ENCODE measurements at regions of chr12 and their contacts with region 1.

Region 1: GRCh38 chr12:124767066-124767821 is 96.4 kb downstream of the SCARB1 start:
- DNase-seq: no peak
- H3K4me3 ChIP-seq: no peak overlapping the region
- H3K27ac ChIP-seq: peak overlapping the region; percentile 82
- H3K4me1 ChIP-seq: peaks cover 35% of the 10 kb centered on the region
- H3K27me3 ChIP-seq: no peaks in the 10 kb centered on the region
- CTCF ChIP-seq: peak; percentile 98 to 99 (median 98)
- POLR2A ChIP-seq: no peak

Region 2: DNA sequence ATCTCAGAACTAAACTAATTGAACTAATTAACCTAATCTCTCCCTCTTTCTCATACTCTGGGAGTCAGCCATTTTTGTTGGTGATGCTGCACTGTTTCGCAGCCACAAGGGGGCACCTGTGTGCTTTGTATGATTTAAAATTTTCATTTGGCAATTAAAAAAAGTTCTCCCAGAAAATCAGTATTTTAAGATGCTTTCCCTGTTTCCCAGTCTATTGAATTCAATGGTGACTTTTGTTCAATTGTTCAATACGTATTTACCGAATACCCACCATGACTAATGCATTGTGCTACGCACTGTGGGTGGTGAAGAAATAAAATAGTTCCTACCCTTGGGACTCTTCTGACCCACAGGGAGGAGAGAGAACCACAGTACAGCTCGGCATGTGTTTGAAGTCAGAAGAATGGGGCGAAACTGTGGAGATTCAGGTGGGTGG is 730.6 kb before region 1 on chr12:
- intact Hi-C with region 1: loop called (anchors 5 kb)
- DNase-seq: no peak
- H3K4me3 ChIP-seq: no peak overlapping the region
- H3K27ac ChIP-seq: no peak overlapping the region
- H3K4me1 ChIP-seq: peaks cover 7% of the 10 kb centered on the region
- H3K27me3 ChIP-seq: no peaks in the 10 kb centered on the region
- CTCF ChIP-seq: peak; percentile 79 to 92 (median 86)
- POLR2A ChIP-seq: no peak

Region 3: DNA sequence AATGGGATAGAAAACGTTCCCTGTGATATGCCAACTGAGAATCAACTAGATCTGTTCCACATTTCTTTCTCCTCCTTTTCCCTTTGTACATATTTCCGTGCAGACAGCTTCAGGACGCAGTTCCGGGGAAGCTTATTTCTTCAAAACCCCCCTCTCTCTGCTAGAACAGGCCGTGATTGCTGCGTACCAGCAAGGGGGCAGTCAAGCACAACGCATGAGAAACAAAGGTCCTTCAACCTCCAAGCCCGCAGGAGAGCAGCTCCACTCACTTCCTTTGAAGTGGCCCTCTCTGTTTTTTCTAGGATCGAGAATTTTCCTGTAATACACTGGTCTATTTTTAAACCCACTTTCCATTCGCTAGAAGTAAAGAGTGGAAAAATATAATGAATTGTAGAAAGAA is 713.4 kb before region 1 on chr12:
- intact Hi-C with region 1: loop called (anchors 5 kb)
- DNase-seq: no peak
- H3K4me3 ChIP-seq: no peak overlapping the region
- H3K27ac ChIP-seq: no peak overlapping the region
- H3K4me1 ChIP-seq: no peaks in the 10 kb centered on the region
- H3K27me3 ChIP-seq: no peaks in the 10 kb centered on the region
- CTCF ChIP-seq: peak; percentile 34 to 48 (median 41)
- POLR2A ChIP-seq: no peak

Region 4: GRCh38 chr12:124567661-124568373 is 199.4 kb before region 1 on chr12:
- intact Hi-C with region 1: loop called (anchors 5 kb)
- DNase-seq: peak in 1 of 2 donors; percentile 95
- H3K4me3 ChIP-seq: peak overlapping the region; percentile 38 to 39
- H3K27ac ChIP-seq: peak overlapping the region; percentile 85
- H3K4me1 ChIP-seq: peaks cover 54% of the 10 kb centered on the region
- H3K27me3 ChIP-seq: no peaks in the 10 kb centered on the region
- CTCF ChIP-seq: no peak
- POLR2A ChIP-seq: no peak

Region 5: GRCh38 chr12:124675881-124676715 is 91.1 kb before region 1 on chr12:
- intact Hi-C with region 1: loop called (anchors 10 kb)
- DNase-seq: no peak
- H3K4me3 ChIP-seq: peak overlapping the region in 1 of 2 donors; percentile 2
- H3K27ac ChIP-seq: peak overlapping the region; percentile 45
- H3K4me1 ChIP-seq: peaks cover 43% of the 10 kb centered on the region
- H3K27me3 ChIP-seq: no peaks in the 10 kb centered on the region
- CTCF ChIP-seq: no peak
- POLR2A ChIP-seq: no peak

Region 6: DNA sequence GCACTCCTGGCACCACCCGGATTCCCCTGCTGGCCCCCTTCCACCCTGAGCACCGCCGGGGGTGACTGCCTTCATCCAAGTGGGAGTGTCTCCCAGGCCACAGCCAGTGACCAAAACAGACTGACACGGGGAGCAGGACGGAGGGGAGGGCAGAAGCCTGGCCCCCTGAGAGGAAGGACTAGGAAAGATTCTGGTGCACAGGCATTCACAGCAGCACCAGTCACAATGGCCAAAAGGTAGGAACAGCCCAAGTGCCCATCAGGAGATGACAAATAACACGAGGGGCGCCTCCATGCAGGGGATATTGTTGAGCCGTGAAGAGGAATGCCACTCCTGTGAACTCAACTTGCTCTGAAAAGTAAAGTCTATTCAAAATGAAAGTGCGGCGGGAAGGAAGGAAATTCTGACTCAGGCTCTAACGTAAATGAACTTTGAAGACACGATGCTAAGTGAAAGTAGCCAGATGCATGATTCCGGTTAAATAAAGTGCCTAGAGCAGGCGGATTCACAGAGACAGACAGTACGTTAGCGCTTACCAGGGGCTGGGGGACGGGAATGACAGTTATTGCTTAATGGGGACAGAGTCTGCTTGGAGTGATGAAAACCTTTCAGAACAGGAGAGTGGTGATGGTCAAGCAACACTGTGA is 53.7 kb before region 1 on chr12:
- intact Hi-C with region 1: loop called (anchors 10 kb)
- DNase-seq: no peak
- H3K4me3 ChIP-seq: peak overlapping the region; percentile 14 to 19
- H3K27ac ChIP-seq: peak overlapping the region; percentile 81
- H3K4me1 ChIP-seq: peaks cover 21% of the 10 kb centered on the region
- H3K27me3 ChIP-seq: no peaks in the 10 kb centered on the region
- CTCF ChIP-seq: no peak
- POLR2A ChIP-seq: no peak